Natural killer cell (primary cell): ENCODE measurements at regions of chr3 and their contacts with region 1.

Region 1: DNA sequence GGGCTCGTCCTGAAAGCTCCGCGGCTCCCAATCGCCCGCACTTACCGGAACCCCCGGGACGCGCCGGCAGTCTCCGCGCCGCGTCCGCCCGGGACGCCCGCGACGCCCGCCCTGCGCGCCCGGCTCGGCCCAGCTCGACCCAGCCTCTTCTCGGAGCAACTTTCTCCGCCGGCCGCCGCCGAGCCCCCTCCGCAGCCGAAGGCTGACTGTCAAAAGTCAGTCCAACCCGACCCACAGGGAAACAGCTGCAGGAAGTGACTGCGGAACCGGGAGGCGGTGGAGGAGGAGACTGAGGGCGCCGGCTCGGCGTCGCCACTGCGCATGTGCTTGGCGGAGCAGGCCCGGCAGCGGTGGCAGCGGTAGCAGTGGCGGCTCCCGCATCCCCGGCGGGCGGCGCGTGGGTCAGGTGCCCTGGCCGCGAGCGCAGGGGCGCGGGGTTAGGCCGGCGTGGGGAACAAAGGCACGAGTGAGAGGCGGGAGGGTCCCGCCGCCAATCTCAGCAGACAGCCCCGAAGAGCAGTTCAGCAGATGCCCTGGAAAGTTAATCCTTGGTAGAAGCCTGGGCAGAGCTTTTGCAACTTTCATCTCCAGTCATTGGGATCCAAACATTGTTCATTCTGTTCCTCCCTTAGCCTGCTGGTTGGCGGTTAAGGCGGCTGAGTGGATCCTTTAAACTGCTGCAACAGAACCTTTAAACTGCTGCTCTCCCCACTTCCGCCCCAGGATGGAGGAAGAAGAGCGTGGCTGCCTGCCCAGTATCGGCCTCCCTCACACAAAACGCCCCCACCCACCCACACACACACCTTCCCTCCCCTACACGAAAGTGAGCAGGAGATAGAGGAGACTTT is at the start of gene ZMAT3:
- DNase-seq: peak; percentile 73 to 92
- ATAC-seq: peak; percentile 83 to 87 (median 86)
- H3K4me3 ChIP-seq: peak within 1 kb of the TSS; percentile 66
- H3K4me3 Mint-ChIP-seq: peak within 1 kb of the TSS; percentile 92
- H3K27ac ChIP-seq: peak within 1 kb of the TSS; percentile 78
- H3K27ac Mint-ChIP-seq: peak within 1 kb of the TSS; percentile 74 to 80
- H3K4me1 ChIP-seq: peaks cover 14% of the 10 kb centered on the region
- H3K4me1 Mint-ChIP-seq: peaks cover 29 to 30% of the 10 kb centered on the region in 2 donors
- H3K27me3 ChIP-seq: no peaks in the 10 kb centered on the region
- H3K27me3 Mint-ChIP-seq: no peaks in the 10 kb centered on the region
- CTCF ChIP-seq: no peak
- total RNA-seq, gene ZMAT3: 22.5 to 32.9 (median 24.1) TPM

Region 2: GRCh38 chr3:179015551-179016020 is 56.2 kb before region 1 on chr3:
- intact Hi-C with region 1: loop called (anchors 2 kb)
- DNase-seq: peak in 1 of 2 donors; percentile 90
- ATAC-seq: peak; percentile 96 to 100 (median 99)
- H3K4me3 ChIP-seq: no peak overlapping the region
- H3K4me3 Mint-ChIP-seq: no peak overlapping the region
- H3K27ac ChIP-seq: no peak overlapping the region
- H3K27ac Mint-ChIP-seq: peak overlapping the region; percentile 61 to 64
- H3K4me1 ChIP-seq: no peaks in the 10 kb centered on the region
- H3K4me1 Mint-ChIP-seq: peaks cover 6 to 10% of the 10 kb centered on the region in 2 donors
- H3K27me3 ChIP-seq: no peaks in the 10 kb centered on the region
- H3K27me3 Mint-ChIP-seq: no peaks in the 10 kb centered on the region
- CTCF ChIP-seq: peak; percentile 82

Region 3: GRCh38 chr3:179292450-179292849 is 220.7 kb after region 1 on chr3:
- intact Hi-C with region 1: no loop called
- DNase-seq: no peak
- ATAC-seq: no peak
- H3K4me3 ChIP-seq: no peak overlapping the region
- H3K4me3 Mint-ChIP-seq: no peak overlapping the region
- H3K27ac ChIP-seq: no peak overlapping the region
- H3K27ac Mint-ChIP-seq: no peak overlapping the region
- H3K4me1 ChIP-seq: no peaks in the 10 kb centered on the region
- H3K4me1 Mint-ChIP-seq: no peaks in the 10 kb centered on the region
- H3K27me3 ChIP-seq: no peaks in the 10 kb centered on the region
- H3K27me3 Mint-ChIP-seq: peaks cover 11 to 17% of the 10 kb centered on the region in 2 donors
- CTCF ChIP-seq: no peak

Region 4: DNA sequence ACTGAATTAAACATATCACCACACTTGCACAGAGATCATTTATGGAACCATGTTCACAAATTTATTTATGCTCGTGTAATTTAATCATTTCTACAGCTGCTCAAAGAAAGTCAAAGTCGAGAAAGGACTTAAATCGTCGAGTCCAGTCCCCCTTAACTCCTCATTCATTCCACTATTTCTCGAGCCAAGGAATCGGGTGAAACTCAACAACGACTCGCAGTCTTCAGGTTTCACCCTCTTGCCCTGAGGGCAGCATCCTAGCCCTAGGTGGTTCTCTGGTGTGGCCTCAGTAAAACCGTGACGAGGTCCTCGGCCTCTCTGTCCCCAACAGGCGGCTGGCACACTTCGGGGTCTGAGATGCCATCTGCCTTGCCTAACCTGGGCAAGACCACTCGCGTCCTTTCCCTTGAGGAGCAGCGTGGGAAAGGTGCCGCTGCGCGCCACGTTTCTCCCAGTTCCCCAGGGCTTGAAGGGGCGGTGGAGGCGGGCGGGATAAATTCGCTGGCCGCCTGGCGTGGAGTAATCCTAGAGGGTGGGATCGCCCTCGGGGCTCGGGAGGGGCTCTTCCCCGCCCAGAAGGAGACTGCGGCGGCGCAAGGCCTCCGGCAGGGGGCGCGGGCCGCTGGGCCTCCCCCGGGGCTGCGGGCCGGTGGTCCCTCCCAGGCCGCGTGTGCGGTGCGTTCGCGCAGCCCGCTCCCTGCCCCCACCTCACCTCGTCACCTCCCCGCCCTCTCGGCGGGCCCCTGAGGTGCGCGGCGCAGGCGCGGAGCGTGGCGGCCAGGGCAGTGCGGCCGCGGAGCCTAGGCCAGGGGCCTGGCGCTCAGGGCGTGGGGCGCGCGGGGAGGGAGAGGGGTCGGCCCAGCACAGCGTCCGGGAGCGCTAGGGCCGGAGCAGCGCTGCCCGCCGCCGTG is 250.8 kb after region 1 on chr3 and contains the start of gene ZNF639:
- intact Hi-C with region 1: loop called (anchors 2 kb)
- DNase-seq: peak; percentile 85 to 95
- ATAC-seq: peak; percentile 88 to 96 (median 89)
- H3K4me3 ChIP-seq: peak within 1 kb of the TSS; percentile 98
- H3K4me3 Mint-ChIP-seq: peak within 1 kb of the TSS; percentile 90
- H3K27ac ChIP-seq: peak within 1 kb of the TSS; percentile 97
- H3K27ac Mint-ChIP-seq: peak within 1 kb of the TSS; percentile 92 to 94
- H3K4me1 ChIP-seq: peaks cover 17% of the 10 kb centered on the region
- H3K4me1 Mint-ChIP-seq: peaks cover 29% of the 10 kb centered on the region in 2 donors
- H3K27me3 ChIP-seq: no peaks in the 10 kb centered on the region
- H3K27me3 Mint-ChIP-seq: no peaks in the 10 kb centered on the region
- CTCF ChIP-seq: peak; percentile 80
- total RNA-seq, gene ZNF639: 51.8 to 54.5 (median 53.5) TPM